B cell (primary cell): ENCODE measurements at regions of chr1 and their contacts with region 1.

Region 1: DNA sequence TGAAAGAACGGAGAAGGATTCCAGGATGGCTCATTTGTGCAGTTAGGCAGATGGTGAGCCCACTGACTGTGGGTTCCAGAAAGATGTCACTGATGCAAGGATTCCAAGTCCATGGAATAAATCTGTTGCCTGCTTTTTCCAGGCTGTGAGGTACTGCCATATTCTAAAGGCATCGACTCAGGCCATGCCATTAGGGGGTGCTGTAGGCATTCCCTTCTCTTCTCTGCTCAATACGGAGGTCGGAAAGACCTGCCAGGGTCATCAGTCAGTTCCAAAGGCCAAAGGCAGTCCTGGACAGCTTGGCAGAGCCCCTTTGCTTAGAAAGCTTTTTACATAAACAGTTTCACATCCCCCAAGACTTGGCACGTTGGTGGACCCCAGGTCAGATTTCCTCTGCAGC is 31.7 kb upstream of the TMEM125 start:
- DNase-seq: peak; percentile 40
- ATAC-seq: no peak
- H3K4me3 ChIP-seq: no peak overlapping the region
- H3K4me3 Mint-ChIP-seq: no peak overlapping the region
- H3K27ac ChIP-seq: no peak overlapping the region
- H3K27ac Mint-ChIP-seq: peak overlapping the region; percentile 90
- H3K4me1 ChIP-seq: peaks cover 27 to 31% of the 10 kb centered on the region in 2 donors
- H3K4me1 Mint-ChIP-seq: peaks cover 35% of the 10 kb centered on the region
- H3K27me3 ChIP-seq: peaks cover 0 to 2% (median 0%) of the 10 kb centered on the region in 4 experiments
- H3K27me3 Mint-ChIP-seq: peaks cover 4% of the 10 kb centered on the region
- CTCF ChIP-seq: no peak

Region 2: GRCh38 chr1:43220905-43221778 is 16.9 kb before region 1 on chr1:
- CTCF ChIA-PET with region 1: interaction called, 30 read pairs
- POLR2A ChIA-PET with region 1: no interaction called
- intact Hi-C with region 1: loop called (anchors 2 kb)
- DNase-seq: peak; percentile 71
- ATAC-seq: peak; percentile 88
- H3K4me3 ChIP-seq: peak overlapping the region in 1 of 5 experiments; percentile 21
- H3K4me3 Mint-ChIP-seq: peak overlapping the region; percentile 67
- H3K27ac ChIP-seq: peak overlapping the region; percentile 68 to 69
- H3K27ac Mint-ChIP-seq: peak overlapping the region; percentile 96
- H3K4me1 ChIP-seq: peaks cover 23 to 26% of the 10 kb centered on the region in 2 donors
- H3K4me1 Mint-ChIP-seq: peaks cover 27% of the 10 kb centered on the region
- H3K27me3 ChIP-seq: no peaks in the 10 kb centered on the region
- H3K27me3 Mint-ChIP-seq: no peaks in the 10 kb centered on the region
- CTCF ChIP-seq: no peak

Region 3: GRCh38 chr1:43227143-43227764 is 10.8 kb before region 1 on chr1:
- CTCF ChIA-PET with region 1: interaction called, 30 read pairs
- POLR2A ChIA-PET with region 1: no interaction called
- intact Hi-C with region 1: loop called (anchors 1 kb)
- DNase-seq: peak; percentile 87
- ATAC-seq: peak; percentile 96
- H3K4me3 ChIP-seq: no peak overlapping the region
- H3K4me3 Mint-ChIP-seq: no peak overlapping the region
- H3K27ac ChIP-seq: no peak overlapping the region
- H3K27ac Mint-ChIP-seq: no peak overlapping the region
- H3K4me1 ChIP-seq: peaks cover 4 to 9% of the 10 kb centered on the region in 2 donors
- H3K4me1 Mint-ChIP-seq: peaks cover 10% of the 10 kb centered on the region
- H3K27me3 ChIP-seq: no peaks in the 10 kb centered on the region
- H3K27me3 Mint-ChIP-seq: no peaks in the 10 kb centered on the region
- CTCF ChIP-seq: peak; percentile 95

Region 4: DNA sequence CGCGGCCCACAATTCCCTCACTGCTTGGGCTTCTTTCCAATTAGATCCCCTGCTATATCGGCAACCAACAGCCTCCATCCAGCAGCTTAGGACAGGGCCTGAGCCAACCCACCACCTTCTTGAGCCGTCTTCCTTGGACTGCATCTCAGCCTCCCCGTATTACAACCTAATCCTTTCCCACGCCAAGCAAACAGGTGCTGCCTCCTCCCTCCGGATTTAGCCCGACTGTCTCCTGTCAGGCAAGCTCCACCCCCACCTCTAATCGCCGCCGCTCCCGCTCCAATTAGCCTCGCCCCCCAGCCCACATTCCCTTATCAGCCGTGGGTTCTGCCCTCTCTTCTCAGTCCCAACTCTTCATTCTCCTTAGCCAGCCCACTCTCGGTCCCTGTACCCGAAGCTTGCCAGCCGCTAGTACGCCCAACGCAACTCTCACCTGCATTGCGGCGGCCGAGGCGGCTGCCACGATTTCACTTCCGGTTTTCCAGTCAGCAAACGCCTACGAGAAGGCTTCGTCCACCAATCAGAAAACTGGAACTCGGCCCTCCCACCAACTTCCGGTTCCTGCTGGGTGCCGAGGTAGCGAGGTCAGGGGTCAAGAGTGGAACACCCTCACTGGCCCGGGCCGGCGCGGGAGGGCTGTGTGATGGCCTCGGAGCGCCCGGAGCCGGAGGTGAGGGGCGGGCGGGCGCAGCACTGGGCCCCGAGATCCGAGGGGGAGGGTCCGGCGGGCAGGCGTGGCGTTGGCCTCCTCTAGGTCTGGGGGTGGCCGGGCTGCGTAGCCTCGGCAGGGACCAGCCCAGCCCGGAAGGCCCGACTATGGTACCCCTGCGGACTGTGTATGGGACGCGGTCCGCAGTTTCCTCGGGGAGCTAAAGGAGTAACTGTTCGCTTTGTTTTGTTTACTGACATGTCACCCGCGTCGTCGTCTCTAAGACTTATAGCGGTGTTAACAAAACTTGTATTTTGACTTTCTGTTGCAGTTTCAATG is 151.5 kb after region 1 on chr1 and contains the starts of genes MED8 and SZT2:
- CTCF ChIA-PET with region 1: interaction called, 10 read pairs
- POLR2A ChIA-PET with region 1: no interaction called
- intact Hi-C with region 1: no loop called
- DNase-seq: peak; percentile 95
- ATAC-seq: peak; percentile 96
- H3K4me3 ChIP-seq: peak within 1 kb of the TSS; percentile 82 to 96 (median 92)
- H3K4me3 Mint-ChIP-seq: peak within 1 kb of the TSS; percentile 100
- H3K27ac ChIP-seq: peak within 1 kb of the TSS; percentile 63 to 87
- H3K27ac Mint-ChIP-seq: peak within 1 kb of the TSS; percentile 98
- H3K4me1 ChIP-seq: peaks cover 20 to 24% of the 10 kb centered on the region in 2 donors
- H3K4me1 Mint-ChIP-seq: peaks cover 41% of the 10 kb centered on the region
- H3K27me3 ChIP-seq: no peaks in the 10 kb centered on the region
- H3K27me3 Mint-ChIP-seq: no peaks in the 10 kb centered on the region
- CTCF ChIP-seq: no peak
- total RNA-seq, gene MED8: 30.0 and 31.8 TPM in 2 replicates
- total RNA-seq, gene SZT2: 193 and 197 TPM in 2 replicates

Region 5: DNA sequence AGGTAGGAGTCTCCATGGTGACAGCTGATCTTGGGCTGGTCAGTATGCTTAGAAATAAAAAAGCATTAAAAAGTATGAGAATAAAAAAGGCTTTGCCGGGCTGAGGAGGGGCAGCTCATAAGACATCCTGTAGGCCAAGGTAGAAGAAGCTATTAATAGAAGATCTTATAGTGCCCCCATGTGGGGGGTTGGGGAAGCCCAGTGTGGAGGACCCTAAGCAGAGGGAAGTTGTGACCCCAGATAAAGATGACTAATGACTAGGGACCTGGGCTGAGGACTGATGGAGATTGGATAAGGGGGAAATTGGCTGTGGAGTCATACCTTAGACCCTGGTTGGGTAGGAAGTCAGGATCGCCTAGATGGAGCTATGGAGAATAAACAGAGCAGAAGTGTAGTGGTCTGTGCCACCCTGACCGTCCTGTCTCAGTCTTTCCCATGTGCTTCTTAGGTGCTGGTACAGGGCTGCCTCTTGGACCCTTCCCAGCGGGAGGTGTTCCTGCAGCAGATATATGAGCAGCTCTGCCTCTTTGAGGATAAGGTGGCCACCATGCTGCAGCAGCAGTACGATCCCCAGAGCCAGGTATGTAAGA is 176.6 kb after region 1 on chr1:
- CTCF ChIA-PET with region 1: interaction called, 332 read pairs
- POLR2A ChIA-PET with region 1: no interaction called
- intact Hi-C with region 1: loop called (anchors 1 kb)
- DNase-seq: peak; percentile 79
- ATAC-seq: peak; percentile 96
- H3K4me3 ChIP-seq: no peak overlapping the region
- H3K4me3 Mint-ChIP-seq: no peak overlapping the region
- H3K27ac ChIP-seq: no peak overlapping the region
- H3K27ac Mint-ChIP-seq: peak overlapping the region; percentile 34
- H3K4me1 ChIP-seq: no peaks in the 10 kb centered on the region
- H3K4me1 Mint-ChIP-seq: peaks cover 3% of the 10 kb centered on the region
- H3K27me3 ChIP-seq: no peaks in the 10 kb centered on the region
- H3K27me3 Mint-ChIP-seq: no peaks in the 10 kb centered on the region
- CTCF ChIP-seq: peak; percentile 79